Caco-2 (cell line): ENCODE measurements at regions of chr6 and their contacts with region 1.

Region 1: DNA sequence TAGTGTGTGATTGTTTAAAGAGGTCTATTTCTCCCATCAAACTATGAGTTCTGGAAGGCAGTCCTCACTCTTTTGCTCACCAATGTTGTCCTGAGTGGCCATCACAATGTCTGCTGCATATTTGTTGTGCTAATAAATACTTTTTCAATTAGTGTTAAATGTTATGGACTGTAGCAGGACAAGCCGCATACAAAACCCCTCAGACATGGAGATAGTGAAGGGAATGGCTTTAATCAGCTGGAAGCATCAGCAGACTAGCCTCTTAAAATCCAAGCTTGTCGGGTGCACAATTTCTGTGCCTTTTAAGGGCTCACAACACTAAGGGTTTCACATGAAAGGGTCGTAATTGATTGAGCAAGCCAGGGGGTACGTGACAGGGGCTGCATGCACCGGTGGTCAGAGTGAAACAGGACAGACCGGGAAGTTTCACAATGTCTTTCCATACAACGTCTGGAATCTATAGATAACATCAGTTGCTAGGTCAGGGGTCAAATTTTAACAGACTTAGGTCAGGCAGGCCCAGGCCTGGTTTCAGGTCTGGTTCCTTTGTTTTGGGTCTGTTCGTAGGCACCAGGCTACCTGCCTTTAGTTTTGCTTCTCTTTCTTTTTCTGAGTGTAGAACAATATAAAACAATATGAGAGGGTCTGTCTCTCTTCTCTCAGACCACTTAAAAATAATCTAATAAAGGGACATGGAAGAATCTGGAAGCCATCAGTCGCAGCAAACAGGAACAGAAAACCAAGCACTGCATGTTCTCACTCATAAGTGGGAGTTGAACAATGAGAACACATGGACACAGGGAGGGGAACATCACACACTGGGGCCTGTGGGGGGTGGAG is 327.6 kb upstream of the HTR1E start:
- DNase-seq: peak; percentile 58 to 67
- H3K4me3 ChIP-seq: no peak overlapping the region
- H3K4me3 Mint-ChIP-seq: no peak overlapping the region
- H3K27ac Mint-ChIP-seq: peak overlapping the region; percentile 54
- H3K4me1 ChIP-seq: peaks cover 7% of the 10 kb centered on the region
- H3K4me1 Mint-ChIP-seq: peaks cover 13% of the 10 kb centered on the region
- H3K27me3 ChIP-seq: no peaks in the 10 kb centered on the region
- H3K27me3 Mint-ChIP-seq: no peaks in the 10 kb centered on the region
- CTCF ChIP-seq: no peak

Region 2: GRCh38 chr6:86715676-86716075 is 105.9 kb after region 1 on chr6:
- CTCF ChIA-PET with region 1: no interaction called
- POLR2A ChIA-PET with region 1: no interaction called
- intact Hi-C with region 1: loop called (anchors 10 kb)
- DNase-seq: peak; percentile 74 to 75
- H3K4me3 ChIP-seq: no peak overlapping the region
- H3K4me3 Mint-ChIP-seq: no peak overlapping the region
- H3K27ac Mint-ChIP-seq: peak overlapping the region; percentile 92
- H3K4me1 ChIP-seq: peaks cover 19% of the 10 kb centered on the region
- H3K4me1 Mint-ChIP-seq: peaks cover 24% of the 10 kb centered on the region
- H3K27me3 ChIP-seq: no peaks in the 10 kb centered on the region
- H3K27me3 Mint-ChIP-seq: no peaks in the 10 kb centered on the region
- CTCF ChIP-seq: no peak